ENCODE measurements at regions of chr2 and their contacts with region 1.

Region 1: DNA sequence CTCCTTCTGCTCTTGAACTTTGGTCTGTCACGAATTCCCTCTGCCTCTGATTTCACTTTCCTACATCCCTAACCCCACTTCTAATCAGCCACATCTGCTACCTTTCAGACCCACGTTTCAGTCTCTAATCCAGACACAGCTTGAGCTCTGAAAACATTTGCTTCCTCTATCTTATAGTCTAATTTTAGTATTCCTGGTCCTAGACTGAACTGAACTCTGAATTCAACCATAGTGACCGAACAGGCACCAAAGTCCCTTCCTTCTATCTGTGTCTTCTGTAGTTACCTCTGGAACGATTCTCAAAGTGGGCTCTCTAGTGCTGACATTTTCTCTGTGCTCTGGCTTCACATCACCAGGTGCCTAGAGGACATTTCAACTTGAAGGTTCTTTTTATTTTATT is 156.2 kb downstream of the PDE11A start:
- DNase-seq: no peak
- ATAC-seq: no peak
- H3K4me3 ChIP-seq: no peak overlapping the region
- H3K27ac ChIP-seq: no peak overlapping the region
- H3K4me1 ChIP-seq: no peaks in the 10 kb centered on the region
- CTCF ChIP-seq: no peak
- EP300 ChIP-seq: no peak
- POLR2A ChIP-seq: no peak
- RAD21 ChIP-seq: no peak

Region 2: GRCh38 chr2:177906041-177906718 is 10.2 kb before region 1 on chr2:
- CTCF ChIA-PET with region 1: interaction called, 10 read pairs
- POLR2A ChIA-PET with region 1: no interaction called
- DNase-seq: peak; percentile 38 to 75
- ATAC-seq: peak; percentile 98 to 99
- H3K4me3 ChIP-seq: peak overlapping the region; percentile 30
- H3K27ac ChIP-seq: peak overlapping the region; percentile 25 to 39; a peak in 2 of 6 replicates
- H3K4me1 ChIP-seq: no peaks in the 10 kb centered on the region
- CTCF ChIP-seq: peak; percentile 85
- EP300 ChIP-seq: no peak
- POLR2A ChIP-seq: no peak
- RAD21 ChIP-seq: peak; percentile 55 to 61; a peak in 4 of 5 replicates

Measured in A549 (cell line).